T-cell (primary cell): ENCODE measurements at regions of chr2 and their contacts with region 1.

Region 1: GRCh38 chr2:234446404-234447076 is 50.3 kb downstream of the ARL4C start:
- DNase-seq: peak; percentile 62 to 91 (median 80)
- ATAC-seq: peak; percentile 85 to 90 (median 88)
- H3K4me3 ChIP-seq: no peak overlapping the region
- H3K4me3 Mint-ChIP-seq: peak overlapping the region; percentile 49 to 74 (median 60)
- H3K27ac ChIP-seq: peak overlapping the region; percentile 98
- H3K27ac Mint-ChIP-seq: peak overlapping the region; percentile 98 to 99
- H3K4me1 ChIP-seq: peaks cover 72 to 78% of the 10 kb centered on the region in 2 experiments
- H3K4me1 Mint-ChIP-seq: peaks cover 89 to 98% (median 93%) of the 10 kb centered on the region in 3 donors
- H3K27me3 ChIP-seq: no peaks in the 10 kb centered on the region
- H3K27me3 Mint-ChIP-seq: no peaks in the 10 kb centered on the region

Region 2: DNA sequence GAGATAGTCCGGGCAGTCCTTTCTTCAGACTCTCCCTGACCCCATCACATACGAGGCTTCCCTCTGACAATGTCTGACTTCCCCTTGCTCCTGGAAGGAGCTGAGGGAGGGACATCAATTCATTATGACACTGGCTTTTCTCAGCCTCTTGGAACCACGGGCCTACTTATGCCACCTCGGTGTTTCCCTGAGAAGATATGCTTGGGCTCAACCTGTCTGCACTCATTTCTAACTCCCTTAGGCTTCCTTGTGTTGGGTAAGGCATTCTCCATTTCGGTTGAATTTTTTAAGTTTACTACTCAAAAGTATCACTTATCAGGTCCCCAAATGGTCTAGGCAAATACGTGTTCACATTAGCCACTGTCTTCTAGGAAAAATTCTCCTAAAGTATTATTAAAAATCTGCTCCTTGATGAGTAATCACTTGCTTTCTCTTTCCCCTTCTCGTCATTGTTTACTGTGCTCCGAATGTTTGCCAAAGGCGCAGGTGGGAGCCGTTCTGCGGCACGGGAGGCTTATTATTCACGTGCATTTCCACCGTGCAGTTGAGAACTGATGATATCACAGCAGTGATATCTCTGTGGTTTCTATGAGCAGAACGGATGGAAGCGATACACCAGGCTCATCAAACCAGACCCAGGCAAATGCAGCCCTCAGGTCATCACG is 17.2 kb after region 1 on chr2:
- CTCF ChIA-PET with region 1: interaction called, 3 to 12 read pairs
- POLR2A ChIA-PET with region 1: interaction called, 7 to 10 read pairs
- DNase-seq: peak; percentile 54 to 93 (median 79)
- ATAC-seq: peak; percentile 88 to 92 (median 90)
- H3K4me3 ChIP-seq: peak overlapping the region in 1 of 2 donors; percentile 23
- H3K4me3 Mint-ChIP-seq: peak overlapping the region; percentile 65 to 74 (median 71)
- H3K27ac ChIP-seq: peak overlapping the region; percentile 98
- H3K27ac Mint-ChIP-seq: peak overlapping the region; percentile 96 to 97
- H3K4me1 ChIP-seq: peaks cover 39 to 74% of the 10 kb centered on the region in 2 experiments
- H3K4me1 Mint-ChIP-seq: peaks cover 78 to 91% (median 81%) of the 10 kb centered on the region in 3 donors
- H3K27me3 ChIP-seq: no peaks in the 10 kb centered on the region
- H3K27me3 Mint-ChIP-seq: no peaks in the 10 kb centered on the region